Posterior vena cava (tissue), 2 donors: ENCODE measurements at regions of chr4 and their contacts with region 1.

Region 1: DNA sequence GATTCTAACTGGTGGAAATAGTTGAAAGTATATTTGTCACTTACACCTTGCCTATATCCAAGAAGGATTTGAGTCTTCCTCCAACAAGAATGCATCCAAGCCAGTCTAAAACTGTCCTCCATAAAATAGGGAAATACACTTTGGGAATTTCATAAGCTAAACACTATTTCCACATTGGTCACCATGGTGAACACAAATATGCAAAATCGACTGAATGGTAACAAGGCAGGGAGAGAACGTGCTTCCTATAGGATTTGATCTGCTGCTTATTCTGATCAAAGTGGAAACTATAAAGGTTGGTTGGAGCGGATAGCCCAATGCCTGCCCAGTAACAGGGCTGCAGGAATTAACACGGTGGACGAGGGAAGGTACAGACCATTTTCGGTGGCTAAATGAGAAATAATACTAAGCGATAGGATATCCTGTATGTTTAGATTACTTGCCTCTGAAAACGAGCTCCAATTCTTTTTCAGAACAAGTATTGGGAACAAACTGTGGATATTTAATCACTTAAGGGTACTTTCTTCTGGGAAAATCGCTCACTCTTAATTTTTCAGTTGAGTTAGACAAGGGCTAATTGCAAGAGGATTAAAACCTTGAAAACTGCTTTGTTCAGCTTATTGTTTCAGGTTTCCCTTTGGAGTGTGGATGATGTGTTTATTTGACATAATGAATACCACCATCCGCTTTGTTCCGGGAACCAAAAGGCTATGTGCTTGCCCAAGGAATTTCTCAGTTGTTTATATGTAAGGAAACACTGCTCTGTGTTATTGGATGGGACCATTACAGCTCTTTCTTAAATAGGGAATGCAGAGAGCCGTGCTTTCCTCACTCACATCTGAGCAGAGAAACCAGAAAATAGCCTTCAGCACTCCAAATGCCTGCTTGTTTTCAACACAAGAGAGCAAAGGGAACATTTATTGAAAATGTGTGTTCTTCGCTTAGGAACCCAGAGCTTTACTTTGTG is 194.4 kb downstream of the CBR4 start:
- DNase-seq: no peak

Region 2: GRCh38 chr4:168717847-168718246 is 97.8 kb before region 1 on chr4:
- intact Hi-C with region 1: loop called in 1 of 2 experiments (anchors 5 kb)
- DNase-seq: no peak

Region 3: DNA sequence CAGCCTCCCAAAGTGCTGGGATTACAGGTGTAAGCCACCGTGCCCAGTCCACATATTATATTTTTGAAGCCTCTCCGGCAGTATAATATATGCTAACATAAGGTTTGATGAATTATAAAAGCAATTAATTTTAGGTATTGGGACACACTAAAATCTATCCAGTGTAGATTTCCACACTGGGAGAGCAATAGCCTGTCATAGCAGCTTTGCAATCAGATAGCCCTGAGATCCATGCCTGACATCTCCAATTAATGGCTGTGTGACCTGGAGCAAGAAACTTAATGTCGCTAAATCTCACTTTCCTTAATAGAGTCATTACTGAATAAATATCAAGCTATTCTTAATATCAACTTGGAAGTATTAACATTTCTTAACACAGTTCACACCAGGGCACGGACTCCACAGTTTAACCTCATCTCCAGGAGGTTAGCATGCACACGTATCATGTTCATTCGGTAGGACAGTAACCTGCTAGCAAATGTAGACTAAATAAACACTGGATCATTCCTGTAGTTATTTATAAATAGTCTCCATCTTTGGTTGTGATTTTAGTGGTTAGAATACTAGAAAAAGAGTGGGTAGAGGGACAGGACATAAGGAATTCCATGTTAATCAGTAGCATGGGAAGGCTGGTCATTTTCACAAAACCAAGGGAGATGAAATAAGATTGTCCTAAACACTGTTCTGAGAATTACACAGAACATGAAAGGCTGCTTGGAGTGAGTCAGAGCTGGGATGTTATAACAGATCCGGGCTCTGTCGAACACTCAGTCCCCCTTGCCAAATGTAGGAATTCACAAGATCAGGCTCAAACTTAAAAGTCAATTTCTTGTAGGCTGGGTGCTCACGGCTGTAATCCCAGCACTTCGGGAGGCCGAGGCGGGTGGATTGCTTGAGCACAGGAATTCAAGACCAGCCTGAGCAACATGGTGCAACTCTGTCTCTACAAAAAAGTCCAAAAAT is 64.1 kb before region 1 on chr4:
- intact Hi-C with region 1: no loop called
- DNase-seq: no peak

Region 4: DNA sequence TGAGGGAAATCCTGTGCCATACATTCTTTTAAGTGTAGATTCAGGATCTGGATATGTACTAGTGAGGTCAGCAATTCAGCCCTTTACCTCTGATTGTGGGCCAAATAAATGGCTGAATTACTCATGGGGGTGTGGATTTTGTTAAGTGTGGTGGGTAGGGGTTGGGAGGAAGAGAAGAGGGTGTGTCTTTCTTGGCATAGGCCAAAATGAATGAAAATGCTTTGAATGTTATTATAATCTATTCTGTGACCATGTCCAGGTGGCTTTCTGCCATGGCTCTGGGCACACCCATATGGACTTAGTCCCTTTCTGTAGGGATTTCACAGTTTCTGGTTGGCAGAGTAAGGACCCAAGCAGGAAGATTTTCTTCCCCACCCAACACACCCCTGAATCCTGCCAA is 49.9 kb before region 1 on chr4:
- intact Hi-C with region 1: loop called in 1 of 2 experiments (anchors 10 kb)
- DNase-seq: no peak

Region 5: DNA sequence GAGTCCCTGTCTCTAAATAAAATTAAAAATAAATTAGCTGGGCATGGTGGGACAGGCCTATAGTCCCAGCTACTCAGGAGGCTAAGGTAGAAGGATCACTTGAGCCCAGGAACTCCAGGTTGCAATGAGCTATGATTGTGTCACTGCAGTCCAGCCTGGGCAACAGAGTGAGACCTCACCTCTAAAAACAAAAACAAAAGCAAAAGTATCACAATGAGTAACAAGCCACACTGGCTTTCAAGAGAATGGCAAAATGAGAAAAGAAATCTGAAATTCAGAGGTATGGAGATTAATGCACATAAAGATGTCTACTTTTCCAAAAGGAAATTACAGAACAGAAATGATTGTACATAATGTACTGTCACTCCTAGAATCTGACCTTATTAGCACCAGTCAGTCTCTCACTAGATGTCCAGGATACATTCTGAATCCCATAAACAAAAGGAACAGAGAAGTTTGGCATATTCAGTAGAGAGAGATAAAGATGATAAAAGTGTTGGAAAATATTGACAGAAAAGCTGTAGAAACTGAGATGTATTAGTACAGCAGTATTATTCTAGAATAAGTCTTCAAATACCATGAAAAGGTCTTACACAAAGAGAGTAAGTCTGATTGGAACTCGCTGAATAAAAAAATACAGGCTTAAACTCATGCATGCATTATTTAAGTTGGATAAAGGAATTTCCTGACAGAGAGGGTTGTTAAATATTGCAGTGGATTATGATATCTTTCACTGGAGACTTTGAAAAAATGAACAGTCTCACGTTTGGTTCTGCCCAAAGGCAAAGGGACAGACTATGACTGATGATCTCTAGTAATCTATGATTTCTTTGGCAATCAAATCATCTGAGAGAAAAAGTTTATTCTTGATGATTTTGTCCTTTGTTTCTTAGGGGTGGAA is 352.5 kb after region 1 on chr4:
- intact Hi-C with region 1: no loop called
- DNase-seq: no peak